ENCODE measurements at regions of chr19 and their contacts with region 1.

Region 1: GRCh38 chr19:58519355-58520256 is at the start of gene ZBTB45:
- DNase-seq: peak; percentile 98
- H3K4me3 ChIP-seq: peak within 1 kb of the TSS; percentile 87
- H3K27ac ChIP-seq: peak within 1 kb of the TSS; percentile 80
- H3K4me1 ChIP-seq: peaks cover 14% of the 10 kb centered on the region
- CTCF ChIP-seq: peak; percentile 77
- total RNA-seq, gene ZBTB45: 6.7 and 10.7 TPM in 2 replicates

Region 2: DNA sequence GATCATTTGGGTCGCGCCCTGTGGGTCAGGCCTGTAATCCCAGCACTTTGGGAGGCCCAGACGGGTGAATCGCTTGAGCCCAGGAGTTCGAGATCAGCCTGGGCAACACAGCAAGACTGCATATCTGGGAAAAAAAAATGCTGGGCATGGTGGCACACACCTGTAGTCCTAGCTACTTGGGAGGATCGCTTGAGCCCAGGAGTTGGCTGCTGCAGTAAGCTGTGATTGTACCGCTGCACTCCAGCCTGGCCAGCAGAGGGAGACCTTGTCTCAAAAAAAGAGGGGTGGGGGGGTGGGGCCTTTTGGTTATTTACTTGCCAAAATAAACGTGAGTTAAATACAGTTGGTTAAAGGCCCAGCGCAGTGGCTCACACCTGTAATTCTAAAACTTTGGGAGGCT is 300.7 kb before region 1 on chr19:
- CTCF ChIA-PET with region 1: no interaction called
- POLR2A ChIA-PET with region 1: no interaction called
- intact Hi-C with region 1: loop called (anchors 2 kb)
- DNase-seq: peak; percentile 54
- H3K4me3 ChIP-seq: no peak overlapping the region
- H3K27ac ChIP-seq: no peak overlapping the region
- H3K4me1 ChIP-seq: no peaks in the 10 kb centered on the region
- CTCF ChIP-seq: peak; percentile 67

Region 3: DNA sequence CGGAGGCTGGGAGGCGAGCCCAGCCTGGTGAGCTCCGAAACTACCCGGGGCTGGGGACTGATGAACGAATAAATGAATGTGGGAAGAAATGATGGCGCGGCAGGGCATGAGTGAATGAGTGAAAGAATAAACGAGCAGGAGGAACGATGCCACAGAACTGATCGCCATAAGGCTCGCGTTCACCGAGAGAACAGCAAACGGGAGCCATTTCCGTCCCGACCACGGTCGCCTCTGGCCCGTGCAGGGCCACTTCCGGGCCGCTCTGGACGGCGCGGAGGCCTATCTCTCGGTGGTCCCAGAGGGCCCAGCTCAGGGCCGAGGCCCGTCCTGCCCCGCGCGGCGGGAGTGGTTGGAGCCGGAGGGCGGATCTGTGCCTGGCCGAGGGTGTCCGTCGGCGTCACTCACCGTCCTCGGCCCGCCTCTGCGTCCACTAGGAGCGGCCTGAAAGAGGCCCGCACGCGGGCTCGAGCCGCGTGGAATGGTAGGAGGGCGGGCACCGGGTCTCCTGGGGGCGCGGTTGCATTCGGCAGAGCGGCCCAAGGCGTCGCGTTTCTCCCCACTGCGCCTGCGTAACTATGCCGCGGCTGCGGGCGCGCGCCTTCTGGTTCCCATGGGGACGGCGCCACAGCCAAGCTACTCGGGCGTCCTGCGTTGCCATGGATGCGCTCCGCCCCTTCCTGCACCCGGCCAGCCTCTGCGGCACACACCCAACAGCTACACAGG is 157.2 kb before region 1 on chr19 and contains the start of gene ZNF497:
- CTCF ChIA-PET with region 1: no interaction called
- POLR2A ChIA-PET with region 1: no interaction called
- intact Hi-C with region 1: loop called (anchors 1 kb)
- DNase-seq: peak; percentile 97
- H3K4me3 ChIP-seq: peak within 1 kb of the TSS; percentile 75
- H3K27ac ChIP-seq: peak within 1 kb of the TSS; percentile 41
- H3K4me1 ChIP-seq: peaks cover 18% of the 10 kb centered on the region
- CTCF ChIP-seq: no peak
- total RNA-seq, gene ZNF497: 2.8 and 3.6 TPM in 2 replicates

Region 4: DNA sequence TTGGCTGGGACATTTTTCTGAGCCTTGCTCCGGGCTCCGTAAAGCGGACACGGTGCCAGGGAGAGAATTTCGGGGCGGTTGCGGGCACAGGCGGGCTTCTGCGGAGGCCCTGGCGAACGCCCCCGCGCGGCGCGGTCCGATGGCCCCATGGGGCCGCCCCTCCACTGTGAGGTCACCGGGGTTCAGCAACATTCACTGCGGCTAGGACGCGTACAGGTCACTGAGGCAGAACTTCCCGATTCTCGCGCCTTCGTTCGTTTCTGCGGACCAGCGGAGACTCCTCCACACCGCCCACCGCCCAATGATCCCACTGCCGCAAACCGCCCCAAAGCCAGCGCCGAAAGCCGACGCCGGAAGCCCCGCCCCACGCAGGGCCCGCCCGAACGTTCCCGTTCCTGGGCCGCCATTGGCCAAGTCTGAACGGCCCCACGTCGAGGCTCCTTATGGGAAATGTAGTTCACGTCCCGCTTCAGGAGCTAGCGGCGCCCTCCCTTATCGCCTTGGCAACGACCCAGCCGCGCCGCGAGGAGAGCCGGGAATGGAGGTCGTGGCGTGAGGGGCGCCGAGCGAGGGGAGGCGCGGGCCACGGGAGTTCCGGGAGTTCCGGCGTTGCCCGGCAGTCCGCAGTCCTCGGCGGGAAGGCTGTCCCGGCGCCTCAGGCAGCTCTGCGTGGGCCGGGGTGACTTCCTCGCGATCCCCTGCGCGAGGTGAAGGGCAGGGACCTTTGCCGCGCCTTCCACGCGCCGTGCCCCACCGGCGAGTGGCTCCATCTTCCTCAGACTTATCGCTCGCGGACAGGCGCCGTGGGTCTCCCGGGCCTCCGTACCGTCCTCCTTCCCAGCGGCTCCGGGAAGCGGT is 111.2 kb before region 1 on chr19 and contains the start of gene ZNF584:
- CTCF ChIA-PET with region 1: no interaction called
- POLR2A ChIA-PET with region 1: no interaction called
- intact Hi-C with region 1: no loop called
- DNase-seq: peak; percentile 97
- H3K4me3 ChIP-seq: peak within 1 kb of the TSS; percentile 83
- H3K27ac ChIP-seq: peak within 1 kb of the TSS; percentile 47
- H3K4me1 ChIP-seq: peaks cover 20% of the 10 kb centered on the region
- CTCF ChIP-seq: peak; percentile 45
- total RNA-seq, gene ZNF584: 9.8 and 12.4 TPM in 2 replicates

Region 5: GRCh38 chr19:58466760-58467589 is 52.6 kb before region 1 on chr19 and contains the start of gene ZNF324:
- CTCF ChIA-PET with region 1: no interaction called
- POLR2A ChIA-PET with region 1: no interaction called
- intact Hi-C with region 1: no loop called
- DNase-seq: peak; percentile 99
- H3K4me3 ChIP-seq: peak within 1 kb of the TSS; percentile 81
- H3K27ac ChIP-seq: no peak within 1 kb of the TSS
- H3K4me1 ChIP-seq: peaks cover 12% of the 10 kb centered on the region
- CTCF ChIP-seq: peak; percentile 43; the same call in 1 of the 2 replicates
- total RNA-seq, gene ZNF324: 16.5 and 23.3 TPM in 2 replicates

Region 6: DNA sequence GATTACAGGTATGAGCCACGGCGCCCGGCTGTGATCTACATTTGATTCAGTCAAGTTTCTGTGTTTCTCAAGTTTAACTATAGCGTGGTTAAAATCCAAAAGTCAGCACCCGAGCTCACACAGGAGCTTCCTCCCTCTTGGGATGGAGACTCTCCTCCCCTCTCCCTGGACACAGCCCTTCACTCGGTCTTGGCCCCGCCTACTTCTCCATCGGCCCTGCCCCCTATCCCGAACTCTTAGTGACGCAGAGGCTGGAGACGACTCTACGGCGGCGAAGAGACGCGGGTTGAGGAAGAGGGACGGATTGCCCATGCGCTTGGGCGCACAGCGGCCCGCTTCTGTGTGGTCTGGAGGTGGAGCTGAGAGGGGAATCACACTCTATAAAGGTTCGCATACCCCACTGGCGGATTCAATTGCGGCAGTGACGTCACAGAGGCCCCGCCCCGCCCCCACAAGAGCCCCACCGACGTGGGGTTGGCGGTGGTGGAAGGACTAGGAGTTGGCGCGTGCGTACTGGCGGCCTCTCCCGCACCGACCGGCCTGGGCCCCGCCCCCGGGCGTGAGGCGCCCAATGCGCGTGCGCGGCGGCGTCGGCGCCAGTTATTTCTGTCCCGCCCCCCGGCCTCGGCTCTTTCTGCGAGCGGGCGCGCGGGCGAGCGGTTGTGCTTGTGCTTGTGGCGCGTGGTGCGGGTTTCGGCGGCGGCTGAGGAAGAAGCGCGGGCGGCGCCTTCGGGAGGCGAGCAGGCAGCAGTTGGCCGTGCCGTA is 24.4 kb after region 1 on chr19 and contains the start of gene TRIM28:
- CTCF ChIA-PET with region 1: interaction called, 3 read pairs
- POLR2A ChIA-PET with region 1: interaction called, 14 read pairs
- intact Hi-C with region 1: loop called (anchors 1 kb)
- DNase-seq: peak; percentile 98
- H3K4me3 ChIP-seq: peak within 1 kb of the TSS; percentile 94
- H3K27ac ChIP-seq: peak within 1 kb of the TSS; percentile 87
- H3K4me1 ChIP-seq: peaks cover 20% of the 10 kb centered on the region
- CTCF ChIP-seq: no peak
- total RNA-seq, gene TRIM28: 551 and 729 TPM in 2 replicates

Region 7: GRCh38 chr19:58578016-58578925 is 58.7 kb after region 1 on chr19:
- CTCF ChIA-PET with region 1: no interaction called
- POLR2A ChIA-PET with region 1: interaction called, 11 read pairs
- intact Hi-C with region 1: loop called (anchors 2 kb)
- DNase-seq: no peak
- H3K4me3 ChIP-seq: peak overlapping the region; percentile 39
- H3K27ac ChIP-seq: peak overlapping the region; percentile 32
- H3K4me1 ChIP-seq: peaks cover 35% of the 10 kb centered on the region
- CTCF ChIP-seq: no peak

Measured in OCI-LY7 (cell line).